ENCODE measurements at regions of chr3 and their contacts with region 1.

Region 1: DNA sequence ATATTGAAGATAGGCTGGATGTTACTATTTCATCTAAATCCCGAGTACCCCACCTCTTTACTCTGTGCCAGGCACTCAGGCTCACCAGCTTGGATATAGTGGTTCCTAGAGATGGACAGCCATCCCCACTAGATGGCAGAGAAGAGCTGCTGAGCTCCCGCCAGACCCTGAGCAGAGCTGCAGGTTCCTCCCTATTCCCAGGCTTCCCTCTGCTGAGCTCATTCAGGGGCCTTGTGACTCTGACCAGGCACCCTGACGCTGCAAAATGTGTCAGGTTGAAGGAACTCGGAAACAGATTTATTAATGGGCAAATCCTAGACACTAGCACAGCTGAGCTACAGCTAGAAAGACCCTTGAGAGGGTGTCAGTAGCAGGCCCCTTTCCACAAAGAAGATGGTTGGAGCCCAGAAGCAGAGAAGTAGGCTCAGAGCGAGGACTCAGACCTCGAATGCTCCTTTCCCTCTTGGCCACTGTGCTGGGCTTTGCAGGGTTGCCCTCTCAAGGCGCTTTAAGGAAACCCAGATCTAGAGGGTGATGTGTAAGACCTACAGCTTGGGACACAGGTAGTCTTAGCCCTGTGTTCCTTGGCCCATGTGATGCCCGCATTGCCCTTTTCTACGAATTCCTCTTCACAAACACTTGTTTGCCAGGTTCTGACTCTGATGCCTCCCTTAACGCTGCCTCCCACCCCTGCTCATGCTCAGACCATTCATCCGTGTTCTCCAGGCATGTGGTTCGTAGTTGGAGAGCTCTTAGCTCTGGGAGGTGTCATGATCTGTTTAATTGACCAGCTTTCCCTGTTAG is 38.0 kb upstream of the RHO start:
- DNase-seq: peak; percentile 74
- H3K4me3 ChIP-seq: no peak overlapping the region
- H3K27ac ChIP-seq: peak overlapping the region; percentile 65 to 72 (median 69)
- H3K4me1 ChIP-seq: peaks cover 0 to 17% (median 6%) of the 10 kb centered on the region in 4 donors
- H3K27me3 ChIP-seq: no peaks in the 10 kb centered on the region
- CTCF ChIP-seq: peak; percentile 77 to 85 (median 78)
- EP300 ChIP-seq: no peak
- POLR2A ChIP-seq: no peak

Region 2: GRCh38 chr3:129606636-129607390 is 116.4 kb after region 1 on chr3 and contains the start of gene PLXND1:
- in situ Hi-C with region 1: no loop called
- intact Hi-C with region 1: loop called (anchors 10 kb)
- DNase-seq: peak; percentile 59
- H3K4me3 ChIP-seq: peak within 1 kb of the TSS; percentile 41 to 64 (median 50)
- H3K27ac ChIP-seq: peak within 1 kb of the TSS; percentile 85 to 87 (median 86)
- H3K4me1 ChIP-seq: peaks cover 0 to 49% (median 30%) of the 10 kb centered on the region in 4 donors
- H3K27me3 ChIP-seq: peaks cover 24% of the 10 kb centered on the region
- CTCF ChIP-seq: no peak
- EP300 ChIP-seq: no peak
- POLR2A ChIP-seq: peak; percentile 62
- total RNA-seq, gene PLXND1: 26.4 to 71.8 (median 35.8) TPM

Region 3: GRCh38 chr3:129627429-129628168 is 137.2 kb after region 1 on chr3:
- in situ Hi-C with region 1: loop called in 1 of 4 experiments (anchors 25 kb)
- intact Hi-C with region 1: no loop called
- DNase-seq: peak; percentile 75
- H3K4me3 ChIP-seq: peak overlapping the region; percentile 50 to 77 (median 70)
- H3K27ac ChIP-seq: peak overlapping the region; percentile 95 to 100 (median 99)
- H3K4me1 ChIP-seq: peaks cover 28 to 58% (median 44%) of the 10 kb centered on the region in 4 donors
- H3K27me3 ChIP-seq: no peaks in the 10 kb centered on the region
- CTCF ChIP-seq: peak; percentile 68 to 90 (median 77)
- EP300 ChIP-seq: no peak
- POLR2A ChIP-seq: peak; percentile 13

Region 4: GRCh38 chr3:129824926-129825541 is 334.6 kb after region 1 on chr3:
- in situ Hi-C with region 1: loop called (anchors 25 kb)
- intact Hi-C with region 1: loop called (anchors 10 kb)
- DNase-seq: peak; percentile 31
- H3K4me3 ChIP-seq: no peak overlapping the region
- H3K27ac ChIP-seq: no peak overlapping the region
- H3K4me1 ChIP-seq: peaks cover 0 to 25% (median 0%) of the 10 kb centered on the region in 4 donors
- H3K27me3 ChIP-seq: no peaks in the 10 kb centered on the region
- CTCF ChIP-seq: peak; percentile 65 to 79 (median 66)
- EP300 ChIP-seq: no peak
- POLR2A ChIP-seq: no peak